H1 (cell line): ENCODE measurements at regions of chr11 and their contacts with region 1.

Region 1: DNA sequence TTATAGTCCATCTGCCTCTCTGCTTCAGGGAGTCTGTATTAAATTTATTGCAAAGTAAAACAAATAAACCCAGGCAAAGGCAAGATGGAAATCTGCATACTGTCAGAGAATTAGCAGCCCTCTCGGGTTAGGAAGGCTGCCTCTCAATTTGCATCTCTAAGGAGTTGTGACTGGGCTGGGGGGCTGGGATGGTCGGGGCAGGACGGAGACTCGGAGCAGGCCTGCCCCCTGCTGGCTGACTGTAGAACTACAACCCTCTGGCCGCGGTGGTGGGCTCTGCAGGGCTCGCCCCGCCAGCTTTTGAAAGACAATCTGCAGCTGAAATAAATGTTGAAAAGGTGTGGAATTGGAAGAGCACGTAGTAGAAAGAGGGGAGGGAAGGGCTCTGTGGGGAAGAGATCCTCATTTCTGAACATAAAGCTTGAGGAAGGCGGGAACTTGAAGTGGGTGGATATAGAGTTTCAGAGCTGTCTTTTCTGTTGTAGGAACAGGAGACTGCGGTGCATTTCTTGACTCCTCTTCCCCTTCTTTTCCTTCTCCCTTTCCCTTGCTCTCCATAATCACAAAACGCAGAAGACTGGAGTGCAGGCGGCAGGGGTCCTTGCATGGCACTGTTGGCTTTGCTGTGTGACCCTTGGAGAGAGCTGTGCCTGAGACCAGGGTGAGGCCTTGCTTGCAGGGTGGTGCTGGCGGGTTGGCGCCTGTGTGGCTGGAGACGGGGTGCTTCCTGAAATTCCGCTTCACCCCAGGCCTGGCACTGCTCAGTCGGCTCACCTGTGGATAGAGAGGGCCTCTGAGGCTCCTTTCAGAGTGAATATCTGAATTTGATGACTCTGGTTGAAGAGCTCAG is 22.6 kb upstream of the PKNOX2 start:
- DNase-seq: peak in 1 of 2 experiments; percentile 97
- H3K4me3 ChIP-seq: peak overlapping the region in 1 of 4 experiments; percentile 47; a peak in 2 of 8 replicates
- H3K27ac ChIP-seq: no peak overlapping the region
- H3K4me1 ChIP-seq: peaks cover 10 to 32% (median 25%) of the 10 kb centered on the region in 4 experiments
- H3K27me3 ChIP-seq: peaks cover 5 to 46% (median 35%) of the 10 kb centered on the region in 4 experiments
- CTCF ChIP-seq: peak; percentile 87 to 95 (median 89)
- EP300 ChIP-seq: no peak
- POLR2A ChIP-seq: no peak
- RAD21 ChIP-seq: peak; percentile 83 to 88

Region 2: GRCh38 chr11:124812876-124813275 is 329.0 kb before region 1 on chr11:
- CTCF ChIA-PET with region 1: no interaction called
- POLR2A ChIA-PET with region 1: no interaction called
- DNase-seq: no peak
- H3K4me3 ChIP-seq: no peak overlapping the region
- H3K27ac ChIP-seq: no peak overlapping the region
- H3K4me1 ChIP-seq: no peaks in the 10 kb centered on the region
- H3K27me3 ChIP-seq: no peaks in the 10 kb centered on the region; a peak in 1 of 7 replicates
- CTCF ChIP-seq: no peak
- EP300 ChIP-seq: no peak
- POLR2A ChIP-seq: no peak
- RAD21 ChIP-seq: no peak

Region 3: GRCh38 chr11:125005491-125005890 is 136.4 kb before region 1 on chr11:
- CTCF ChIA-PET with region 1: no interaction called
- POLR2A ChIA-PET with region 1: no interaction called
- DNase-seq: no peak
- H3K4me3 ChIP-seq: no peak overlapping the region
- H3K27ac ChIP-seq: no peak overlapping the region
- H3K4me1 ChIP-seq: no peaks in the 10 kb centered on the region
- H3K27me3 ChIP-seq: no peaks in the 10 kb centered on the region
- CTCF ChIP-seq: no peak
- EP300 ChIP-seq: no peak
- POLR2A ChIP-seq: no peak
- RAD21 ChIP-seq: no peak

Region 4: DNA sequence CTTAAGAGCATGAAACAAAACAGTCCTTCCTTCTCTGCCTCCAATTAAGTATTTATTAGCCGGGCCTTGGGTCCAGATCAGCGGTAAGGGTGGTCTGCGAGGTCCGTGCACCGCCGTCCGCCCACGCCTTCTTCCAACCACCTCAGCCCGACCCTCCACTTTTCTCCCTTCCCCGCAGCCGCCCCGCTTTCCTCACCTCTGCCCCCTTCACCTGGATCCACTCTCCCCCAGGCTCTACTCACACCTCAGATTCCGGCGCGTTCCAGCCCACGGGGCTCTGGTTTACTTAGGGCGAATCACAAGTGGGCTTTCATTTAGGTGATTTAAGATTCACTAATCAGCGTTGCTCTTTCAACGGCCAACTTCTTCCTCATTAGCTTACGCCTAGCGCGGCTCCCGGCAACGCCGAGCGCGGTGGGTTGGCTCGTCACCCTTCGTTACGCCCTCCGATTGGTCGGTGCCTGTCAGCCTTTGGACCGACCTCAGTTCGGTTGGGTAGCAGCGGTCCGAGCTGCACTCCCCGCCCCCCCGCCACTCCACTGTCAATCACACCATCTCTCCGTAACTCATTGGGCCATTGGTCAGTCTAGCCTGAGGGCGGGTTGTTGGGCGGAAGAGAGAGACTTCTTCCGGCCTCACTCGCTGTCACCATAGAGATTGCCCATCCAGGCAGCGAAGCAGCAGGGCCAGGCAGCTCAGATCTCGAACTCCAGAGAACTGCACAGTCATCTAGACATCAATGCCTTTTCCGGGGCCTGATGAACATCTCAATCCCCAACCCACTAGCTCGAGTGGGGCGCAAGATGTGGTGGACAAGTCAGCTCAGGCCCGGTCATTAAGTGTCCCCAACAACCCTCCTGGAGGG is 30.3 kb before region 1 on chr11 and contains the start of gene TMEM218:
- CTCF ChIA-PET with region 1: interaction called, 61 read pairs
- POLR2A ChIA-PET with region 1: interaction called, 3 read pairs
- DNase-seq: peak; percentile 92 to 99
- H3K4me3 ChIP-seq: peak within 1 kb of the TSS; percentile 59 to 80 (median 76)
- H3K27ac ChIP-seq: peak within 1 kb of the TSS; percentile 63
- H3K4me1 ChIP-seq: peaks cover 2 to 6% (median 3%) of the 10 kb centered on the region in 4 experiments; a peak in 3 of 7 replicates
- H3K27me3 ChIP-seq: no peaks in the 10 kb centered on the region
- CTCF ChIP-seq: no peak
- EP300 ChIP-seq: no peak
- POLR2A ChIP-seq: no peak
- RAD21 ChIP-seq: no peak
- total RNA-seq, gene TMEM218: 17.0 and 17.3 TPM in 2 replicates

Region 5: DNA sequence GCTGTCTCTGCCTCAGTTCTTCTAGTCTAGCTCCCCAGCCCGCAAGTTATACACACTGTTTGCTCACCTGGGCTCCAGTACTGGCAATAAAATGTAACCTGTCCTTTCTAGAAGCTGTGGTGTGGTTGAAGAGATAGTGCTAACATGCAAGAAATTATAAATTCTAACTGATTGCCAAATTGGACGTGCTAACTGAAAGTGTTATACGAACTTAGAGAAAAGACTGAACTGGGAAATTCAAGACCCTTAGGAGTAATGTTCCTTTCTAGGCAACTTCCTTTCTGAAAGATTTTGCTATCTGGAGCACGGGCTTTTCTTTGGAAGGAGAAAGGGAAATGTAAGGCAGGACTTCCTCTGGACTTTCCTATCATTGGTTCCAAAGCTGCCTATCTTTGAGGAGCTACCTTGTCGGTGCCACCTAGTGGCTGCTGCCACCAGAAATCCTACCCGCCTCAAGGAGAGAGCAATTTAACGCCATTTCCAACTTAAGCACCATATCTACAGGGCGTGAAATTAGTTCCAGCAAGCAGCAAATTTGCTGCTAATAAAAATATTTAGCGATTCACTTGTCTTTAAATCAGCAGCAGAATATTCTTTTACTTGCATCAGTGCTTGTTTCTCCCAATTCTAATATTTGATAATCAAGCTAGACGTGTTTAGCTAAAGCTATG is 17.8 kb before region 1 on chr11:
- CTCF ChIA-PET with region 1: interaction called, 39 read pairs
- POLR2A ChIA-PET with region 1: no interaction called
- DNase-seq: no peak
- H3K4me3 ChIP-seq: peak overlapping the region in 1 of 4 experiments; percentile 10; a peak in 1 of 8 replicates
- H3K27ac ChIP-seq: no peak overlapping the region
- H3K4me1 ChIP-seq: no peaks in the 10 kb centered on the region
- H3K27me3 ChIP-seq: peaks cover 0 to 6% (median 2%) of the 10 kb centered on the region in 4 experiments; a peak in 4 of 7 replicates
- CTCF ChIP-seq: peak; percentile 54 to 84 (median 69)
- EP300 ChIP-seq: no peak
- POLR2A ChIP-seq: no peak
- RAD21 ChIP-seq: peak; percentile 32 to 47

Region 6: GRCh38 chr11:125164422-125165110 is 22.7 kb after region 1 on chr11 and contains the start of gene PKNOX2:
- CTCF ChIA-PET with region 1: interaction called, 42 read pairs
- POLR2A ChIA-PET with region 1: interaction called, 3 read pairs
- DNase-seq: peak in 1 of 2 experiments; percentile 93
- H3K4me3 ChIP-seq: peak within 1 kb of the TSS; percentile 52 to 74 (median 60)
- H3K27ac ChIP-seq: peak within 1 kb of the TSS; percentile 87
- H3K4me1 ChIP-seq: peaks cover 21 to 44% (median 29%) of the 10 kb centered on the region in 4 experiments
- H3K27me3 ChIP-seq: peaks cover 14 to 44% (median 40%) of the 10 kb centered on the region in 4 experiments
- CTCF ChIP-seq: peak; percentile 45 to 72 (median 67)
- EP300 ChIP-seq: peak in 1 of 2 experiments; percentile 6; a peak in 1 of 3 replicates
- POLR2A ChIP-seq: no peak
- RAD21 ChIP-seq: peak; percentile 54 to 68; a peak in 3 of 4 replicates
- total RNA-seq, gene PKNOX2: 1.9 and 2.0 TPM in 2 replicates

Region 7: DNA sequence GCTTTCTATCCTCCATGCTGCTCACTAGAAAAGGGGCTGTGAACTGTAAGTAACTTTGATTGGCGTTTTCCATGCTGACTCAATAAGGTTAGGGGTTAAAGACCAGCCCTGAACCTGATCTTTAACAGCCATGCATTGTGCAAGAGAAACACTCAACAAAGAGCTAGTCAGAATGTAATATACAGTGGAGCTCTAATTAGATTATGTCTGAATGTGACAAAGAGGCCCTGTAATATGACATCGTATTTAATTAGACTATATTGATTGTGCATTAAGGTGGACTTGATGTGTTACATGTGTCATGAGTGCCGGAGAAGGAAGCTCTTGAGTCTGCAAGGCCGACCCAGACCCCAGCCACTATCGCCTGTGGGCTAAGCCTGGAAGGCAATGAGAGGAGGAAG is 93.2 kb after region 1 on chr11:
- CTCF ChIA-PET with region 1: interaction called, 14 read pairs
- POLR2A ChIA-PET with region 1: no interaction called
- DNase-seq: no peak
- H3K4me3 ChIP-seq: no peak overlapping the region
- H3K27ac ChIP-seq: no peak overlapping the region
- H3K4me1 ChIP-seq: peaks cover 0 to 10% (median 3%) of the 10 kb centered on the region in 4 experiments; a peak in 5 of 7 replicates
- H3K27me3 ChIP-seq: peaks cover 0 to 4% (median 0%) of the 10 kb centered on the region in 4 experiments; a peak in 1 of 7 replicates
- CTCF ChIP-seq: no peak
- EP300 ChIP-seq: no peak
- POLR2A ChIP-seq: no peak
- RAD21 ChIP-seq: no peak

Region 8: GRCh38 chr11:125245299-125245698 is 103.4 kb after region 1 on chr11:
- CTCF ChIA-PET with region 1: no interaction called
- POLR2A ChIA-PET with region 1: no interaction called
- DNase-seq: no peak
- H3K4me3 ChIP-seq: no peak overlapping the region
- H3K27ac ChIP-seq: no peak overlapping the region
- H3K4me1 ChIP-seq: peaks cover 0 to 12% (median 3%) of the 10 kb centered on the region in 4 experiments; a peak in 5 of 7 replicates
- H3K27me3 ChIP-seq: 0 out of 7 replicates have a peak, but pooled peaks cover 0 to 2% (median 0%) of the 10 kb centered on the region in 4 experiments
- CTCF ChIP-seq: no peak
- EP300 ChIP-seq: no peak
- POLR2A ChIP-seq: no peak
- RAD21 ChIP-seq: no peak

Region 9: DNA sequence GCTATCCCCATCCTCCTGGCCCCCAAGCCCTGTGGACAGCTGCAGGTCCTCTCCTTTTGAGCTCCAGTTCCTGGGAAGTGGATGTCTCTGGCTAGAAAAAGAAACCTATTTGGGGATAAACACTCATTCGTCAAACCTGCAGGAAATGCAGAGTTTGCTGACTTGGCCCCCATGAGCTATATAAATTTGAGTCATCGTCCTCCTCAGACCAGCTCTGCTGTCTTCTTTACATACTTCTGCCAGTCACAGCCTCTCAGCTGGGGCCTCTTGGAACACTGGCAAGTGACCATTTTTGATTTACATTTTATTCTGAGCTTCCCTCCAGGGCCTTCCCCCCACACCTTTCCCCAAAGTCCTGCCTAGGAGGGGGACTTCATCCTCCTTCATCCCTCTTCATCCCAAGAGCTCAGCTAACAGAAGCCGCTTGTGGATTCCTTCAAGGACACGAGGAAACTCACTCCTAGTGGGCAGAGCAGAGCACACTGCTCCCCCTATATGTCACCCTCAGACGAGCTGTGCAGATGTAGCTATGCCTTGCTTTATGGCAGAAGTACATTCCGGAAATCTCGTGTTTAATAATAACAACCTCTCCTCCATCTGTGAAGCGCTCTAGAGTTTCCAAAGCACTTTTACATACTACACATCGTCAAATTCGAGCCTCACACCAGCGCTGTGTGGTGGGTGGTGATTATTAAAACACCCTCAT is 222.4 kb after region 1 on chr11:
- CTCF ChIA-PET with region 1: interaction called, 14 read pairs
- POLR2A ChIA-PET with region 1: interaction called, 3 read pairs
- DNase-seq: no peak
- H3K4me3 ChIP-seq: no peak overlapping the region
- H3K27ac ChIP-seq: no peak overlapping the region
- H3K4me1 ChIP-seq: peaks cover 0 to under 1% (median under 1%) of the 10 kb centered on the region in 4 experiments; a peak in 3 of 7 replicates
- H3K27me3 ChIP-seq: no peaks in the 10 kb centered on the region
- CTCF ChIP-seq: peak; percentile 18 to 38 (median 30)
- EP300 ChIP-seq: no peak
- POLR2A ChIP-seq: no peak
- RAD21 ChIP-seq: no peak; a peak in 1 of 4 replicates

Region 10: DNA sequence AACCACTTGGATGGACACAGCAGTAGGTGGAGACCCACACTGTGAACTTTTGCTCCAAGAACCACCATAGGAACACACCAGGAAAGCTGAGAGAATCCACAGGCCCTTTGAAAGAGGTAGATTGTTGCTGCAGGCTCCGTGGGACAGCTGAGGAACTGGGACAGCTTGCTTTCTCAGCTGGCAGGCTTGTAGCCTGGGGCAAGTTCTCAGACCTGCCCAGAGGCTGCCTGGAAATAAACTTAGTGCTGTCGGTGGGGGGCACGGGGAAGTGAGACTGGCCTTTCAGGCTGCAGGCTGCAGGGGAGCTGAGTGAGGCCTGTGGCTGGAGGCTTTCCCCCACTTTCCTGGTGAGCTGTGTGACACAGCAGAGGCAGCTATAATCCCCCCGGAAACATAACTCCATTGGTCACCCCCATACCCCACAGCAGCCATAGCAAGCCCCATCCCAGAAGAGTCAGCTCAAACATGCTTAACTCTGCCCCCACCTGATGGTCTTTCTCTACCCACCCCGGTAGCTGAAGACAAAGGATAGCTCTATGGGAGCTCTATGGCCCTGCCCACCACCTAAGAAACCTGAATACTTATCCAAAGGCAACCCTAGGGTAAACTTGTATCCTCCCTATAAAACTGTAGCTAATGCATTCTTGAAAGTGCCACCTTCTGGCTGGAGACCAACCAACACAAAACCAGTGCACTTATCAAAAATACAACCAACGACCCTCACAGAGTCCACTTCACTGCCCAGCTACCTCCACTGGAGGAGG is 560.1 kb after region 1 on chr11:
- CTCF ChIA-PET with region 1: no interaction called
- POLR2A ChIA-PET with region 1: no interaction called
- DNase-seq: no peak
- H3K4me3 ChIP-seq: no peak overlapping the region
- H3K27ac ChIP-seq: no peak overlapping the region
- H3K4me1 ChIP-seq: peaks cover 0 to 4% (median 0%) of the 10 kb centered on the region in 4 experiments; a peak in 4 of 7 replicates
- H3K27me3 ChIP-seq: no peaks in the 10 kb centered on the region
- CTCF ChIP-seq: no peak
- EP300 ChIP-seq: no peak
- POLR2A ChIP-seq: no peak
- RAD21 ChIP-seq: no peak